Panc1 (cell line): ENCODE measurements at regions of chr20 and their contacts with region 1.

Region 1: GRCh38 chr20:37990571-37991151 is 42.6 kb downstream of the TTI1 start:
- DNase-seq: peak; percentile 52
- ATAC-seq: no peak
- H3K4me3 ChIP-seq: no peak overlapping the region
- H3K27ac ChIP-seq: no peak overlapping the region
- H3K4me1 ChIP-seq: no peaks in the 10 kb centered on the region
- H3K27me3 ChIP-seq: no peaks in the 10 kb centered on the region
- CTCF ChIP-seq: no peak

Region 2: DNA sequence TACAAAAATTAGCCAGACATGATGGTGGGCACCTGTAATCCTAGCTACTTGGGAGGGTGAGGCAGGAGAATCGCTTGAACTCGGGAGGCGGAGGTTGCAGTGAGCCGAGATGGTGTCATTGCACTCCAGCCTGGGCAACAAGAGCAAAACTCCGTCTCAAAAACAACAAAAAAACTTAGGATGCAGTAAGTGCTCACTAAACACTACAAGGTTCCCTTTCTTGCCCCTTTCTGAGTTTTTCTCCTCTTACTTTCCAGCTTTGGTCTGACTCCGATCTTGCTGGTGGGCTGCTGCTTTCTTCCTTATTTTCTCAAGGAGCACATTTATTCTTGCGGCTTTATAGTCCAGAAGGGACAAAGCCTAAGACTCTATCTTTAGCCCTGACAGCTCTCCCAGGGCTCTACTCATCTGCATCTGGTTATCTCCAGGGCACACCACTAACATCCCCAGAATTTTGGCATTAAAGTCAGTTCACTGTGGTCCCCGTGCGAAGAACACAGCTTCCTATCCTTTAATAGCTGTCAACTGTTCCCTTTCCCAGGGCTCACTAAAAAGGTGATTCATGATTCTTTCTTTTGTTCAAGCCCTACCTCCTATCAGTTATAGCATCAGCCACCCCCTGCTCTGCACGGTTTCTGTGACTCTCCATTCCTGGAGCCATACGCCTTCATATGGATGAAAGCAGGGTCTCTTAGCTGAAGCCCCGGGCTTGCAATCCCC is 828.7 kb before region 1 on chr20:
- CTCF ChIA-PET with region 1: interaction called, 17 read pairs
- POLR2A ChIA-PET with region 1: no interaction called
- in situ Hi-C with region 1: no loop called
- intact Hi-C with region 1: no loop called
- DNase-seq: no peak
- ATAC-seq: no peak
- H3K4me3 ChIP-seq: no peak overlapping the region
- H3K27ac ChIP-seq: no peak overlapping the region
- H3K4me1 ChIP-seq: no peaks in the 10 kb centered on the region
- H3K27me3 ChIP-seq: peaks cover 6% of the 10 kb centered on the region; the same call in 1 of the 2 replicates
- CTCF ChIP-seq: no peak

Region 3: GRCh38 chr20:37574199-37574885 is 416.3 kb before region 1 on chr20:
- CTCF ChIA-PET with region 1: no interaction called
- POLR2A ChIA-PET with region 1: no interaction called
- in situ Hi-C with region 1: no loop called
- intact Hi-C with region 1: loop called (anchors 5 kb)
- DNase-seq: no peak
- ATAC-seq: no peak
- H3K4me3 ChIP-seq: no peak overlapping the region
- H3K27ac ChIP-seq: no peak overlapping the region
- H3K4me1 ChIP-seq: no peaks in the 10 kb centered on the region
- H3K27me3 ChIP-seq: peaks cover 12% of the 10 kb centered on the region
- CTCF ChIP-seq: no peak

Region 4: GRCh38 chr20:37890108-37890507 is 100.6 kb before region 1 on chr20:
- CTCF ChIA-PET with region 1: no interaction called
- POLR2A ChIA-PET with region 1: no interaction called
- in situ Hi-C with region 1: no loop called
- intact Hi-C with region 1: no loop called
- DNase-seq: no peak
- ATAC-seq: no peak
- H3K4me3 ChIP-seq: no peak overlapping the region
- H3K27ac ChIP-seq: no peak overlapping the region
- H3K4me1 ChIP-seq: no peaks in the 10 kb centered on the region
- H3K27me3 ChIP-seq: no peaks in the 10 kb centered on the region
- CTCF ChIP-seq: no peak

Region 5: DNA sequence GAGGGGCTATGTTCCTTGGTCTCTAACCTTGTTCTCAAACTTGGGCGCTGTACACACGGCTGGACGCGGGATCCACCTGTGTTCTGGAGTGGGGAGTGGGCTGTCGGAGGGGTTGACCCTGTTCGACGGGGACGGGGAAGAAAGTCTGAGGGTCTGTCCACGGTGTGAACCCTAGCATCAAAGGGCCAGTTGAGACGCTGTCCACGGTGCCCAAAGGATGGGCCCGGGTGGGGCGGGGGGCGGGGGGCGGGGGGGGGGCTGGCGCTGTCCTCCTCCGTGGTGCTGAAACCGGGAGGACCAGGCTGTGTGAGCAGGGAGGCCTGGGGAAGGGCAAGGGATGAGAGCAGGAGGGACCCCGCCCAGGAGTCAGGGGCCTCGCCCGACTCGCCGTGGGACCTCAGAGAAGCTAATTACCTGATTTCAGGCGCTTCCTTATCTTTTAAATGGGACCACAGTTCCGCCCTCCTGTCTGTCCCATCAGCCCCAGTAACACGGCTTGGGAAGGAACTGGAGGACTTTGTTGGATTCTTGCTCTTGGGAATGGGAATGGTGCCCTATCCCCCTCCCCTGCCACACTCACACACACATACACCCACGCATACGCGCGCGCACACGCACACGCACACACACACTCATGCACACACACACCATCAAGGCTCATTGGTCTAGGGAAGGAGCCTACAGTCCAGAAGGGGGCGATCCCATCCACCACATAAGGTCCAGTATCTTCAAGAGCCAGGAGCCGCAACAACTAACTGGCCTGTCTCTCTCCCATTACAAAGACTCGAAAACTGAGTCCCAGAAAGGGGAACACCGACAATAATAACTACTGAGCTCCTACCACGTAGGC is 88.8 kb before region 1 on chr20:
- CTCF ChIA-PET with region 1: interaction called, 3 read pairs
- POLR2A ChIA-PET with region 1: no interaction called
- in situ Hi-C with region 1: no loop called
- intact Hi-C with region 1: loop called (anchors 5 kb)
- DNase-seq: peak; percentile 63
- ATAC-seq: peak; percentile 79
- H3K4me3 ChIP-seq: peak overlapping the region; percentile 47 to 60
- H3K27ac ChIP-seq: no peak overlapping the region
- H3K4me1 ChIP-seq: peaks cover 5% of the 10 kb centered on the region; the same call in 1 of the 2 replicates
- H3K27me3 ChIP-seq: no peaks in the 10 kb centered on the region
- CTCF ChIP-seq: peak; percentile 78

Region 6: GRCh38 chr20:37911838-37912281 is 78.8 kb before region 1 on chr20:
- CTCF ChIA-PET with region 1: interaction called, 4 read pairs
- POLR2A ChIA-PET with region 1: no interaction called
- in situ Hi-C with region 1: no loop called
- intact Hi-C with region 1: loop called (anchors 5 kb)
- DNase-seq: no peak
- ATAC-seq: no peak
- H3K4me3 ChIP-seq: no peak overlapping the region
- H3K27ac ChIP-seq: no peak overlapping the region
- H3K4me1 ChIP-seq: peaks cover 12% of the 10 kb centered on the region
- H3K27me3 ChIP-seq: no peaks in the 10 kb centered on the region
- CTCF ChIP-seq: no peak

Region 7: GRCh38 chr20:38023181-38024001 is 32.7 kb after region 1 on chr20:
- CTCF ChIA-PET with region 1: no interaction called
- POLR2A ChIA-PET with region 1: no interaction called
- in situ Hi-C with region 1: no loop called
- intact Hi-C with region 1: no loop called
- DNase-seq: no peak
- ATAC-seq: 0 out of 2 replicates have a peak, but pooled peaks have one; percentile 38
- H3K4me3 ChIP-seq: no peak overlapping the region
- H3K27ac ChIP-seq: peak overlapping the region; percentile 20; the same call in 1 of the 2 replicates
- H3K4me1 ChIP-seq: peaks cover 10% of the 10 kb centered on the region
- H3K27me3 ChIP-seq: no peaks in the 10 kb centered on the region
- CTCF ChIP-seq: no peak

Region 8: DNA sequence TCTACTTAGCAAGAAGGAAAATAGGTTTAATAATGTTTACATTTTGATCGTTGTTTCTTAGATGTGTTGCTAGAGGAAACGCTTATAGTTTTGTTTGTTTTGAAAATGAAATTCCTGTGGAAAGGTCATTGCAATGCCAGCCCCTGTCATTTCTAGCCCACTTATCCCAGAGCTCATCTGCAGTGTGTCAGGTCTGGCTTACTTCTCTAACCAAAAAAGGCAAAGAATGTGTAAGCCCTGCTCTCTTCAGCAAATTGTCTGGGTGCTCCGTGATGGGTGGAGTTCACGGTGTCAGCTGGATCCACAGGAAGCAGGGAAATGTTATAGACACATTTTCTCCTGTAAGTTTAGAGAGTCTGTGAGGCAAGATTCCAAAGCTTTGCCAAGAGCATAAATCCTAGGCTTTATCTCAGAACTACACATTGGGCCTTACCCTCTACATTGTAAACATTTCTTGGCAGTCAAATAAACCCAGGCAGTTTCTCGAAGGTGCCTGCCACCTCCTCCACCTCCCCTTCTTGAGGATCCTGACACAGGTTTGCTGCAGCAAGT is 93.8 kb after region 1 on chr20:
- CTCF ChIA-PET with region 1: no interaction called
- POLR2A ChIA-PET with region 1: no interaction called
- in situ Hi-C with region 1: no loop called
- intact Hi-C with region 1: no loop called
- DNase-seq: no peak
- ATAC-seq: no peak
- H3K4me3 ChIP-seq: no peak overlapping the region
- H3K27ac ChIP-seq: peak overlapping the region; percentile 45; the same call in 1 of the 2 replicates
- H3K4me1 ChIP-seq: 0 out of 2 replicates have a peak, but pooled peaks cover 4% of the 10 kb centered on the region
- H3K27me3 ChIP-seq: no peaks in the 10 kb centered on the region
- CTCF ChIP-seq: no peak